ENCODE measurements at regions of chrX and their contacts with region 1.

Region 1: GRCh38 chrX:7147978-7148824 is at the start of gene PUDP:
- DNase-seq: peak; percentile 91
- H3K4me3 ChIP-seq: peak within 1 kb of the TSS; percentile 88
- H3K27ac ChIP-seq: peak within 1 kb of the TSS; percentile 85
- H3K4me1 ChIP-seq: peaks cover 10% of the 10 kb centered on the region
- H3K27me3 ChIP-seq: no peaks in the 10 kb centered on the region
- total RNA-seq, gene PUDP: 4.0 and 11.8 TPM in 2 replicates

Region 2: GRCh38 chrX:7586126-7586525 is 437.9 kb after region 1 on chrX:
- in situ Hi-C with region 1: loop called (anchors 25 kb)
- DNase-seq: peak; percentile 62
- H3K4me3 ChIP-seq: no peak overlapping the region
- H3K27ac ChIP-seq: no peak overlapping the region
- H3K4me1 ChIP-seq: no peaks in the 10 kb centered on the region
- H3K27me3 ChIP-seq: no peaks in the 10 kb centered on the region

Region 3: DNA sequence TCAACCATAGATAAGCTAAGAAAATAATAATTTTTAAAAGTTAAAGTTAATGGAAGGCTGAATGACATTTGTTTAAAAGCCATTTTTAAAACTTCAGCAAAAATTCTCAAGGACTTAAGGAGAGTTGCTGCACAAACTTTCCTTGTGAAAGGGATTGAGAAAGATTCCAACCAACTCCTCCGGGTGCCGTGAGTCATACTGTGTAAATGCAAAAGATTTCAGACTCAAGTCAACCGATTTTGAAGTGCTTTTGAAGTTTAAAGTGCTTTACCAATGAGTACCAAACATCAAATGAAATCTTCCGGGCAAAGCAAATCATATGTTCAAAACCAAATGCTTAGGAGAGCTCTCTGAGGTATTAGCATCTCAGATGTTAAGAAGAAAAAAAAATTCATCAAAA is 991.5 kb after region 1 on chrX:
- in situ Hi-C with region 1: no loop called
- DNase-seq: peak; percentile 0
- H3K4me3 ChIP-seq: no peak overlapping the region
- H3K27ac ChIP-seq: no peak overlapping the region
- H3K4me1 ChIP-seq: no peaks in the 10 kb centered on the region
- H3K27me3 ChIP-seq: no peaks in the 10 kb centered on the region